Posterior vena cava (tissue), 2 donors: ENCODE measurements at regions of chr2 and their contacts with region 1.

Region 1: DNA sequence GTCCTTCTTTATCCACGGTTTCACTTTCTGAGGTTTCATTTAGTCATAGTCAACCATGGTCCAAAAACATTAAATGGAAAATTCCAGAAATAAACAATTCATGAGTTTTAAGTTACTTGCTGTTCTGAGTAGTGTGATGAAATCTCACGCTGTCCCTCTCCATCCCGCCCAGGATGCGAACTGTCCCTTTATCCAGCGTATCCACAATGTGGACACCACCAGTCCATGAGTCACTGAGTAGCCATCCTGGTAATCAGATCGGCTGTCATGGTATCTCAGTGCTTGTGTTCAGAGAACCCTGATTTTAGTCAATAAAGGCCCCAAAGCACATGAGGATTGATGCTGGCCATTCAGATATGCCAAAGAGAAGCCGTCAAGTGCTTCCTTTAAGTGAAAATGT is 3.7 kb downstream of the SP140L start:
- DNase-seq: no peak

Region 2: DNA sequence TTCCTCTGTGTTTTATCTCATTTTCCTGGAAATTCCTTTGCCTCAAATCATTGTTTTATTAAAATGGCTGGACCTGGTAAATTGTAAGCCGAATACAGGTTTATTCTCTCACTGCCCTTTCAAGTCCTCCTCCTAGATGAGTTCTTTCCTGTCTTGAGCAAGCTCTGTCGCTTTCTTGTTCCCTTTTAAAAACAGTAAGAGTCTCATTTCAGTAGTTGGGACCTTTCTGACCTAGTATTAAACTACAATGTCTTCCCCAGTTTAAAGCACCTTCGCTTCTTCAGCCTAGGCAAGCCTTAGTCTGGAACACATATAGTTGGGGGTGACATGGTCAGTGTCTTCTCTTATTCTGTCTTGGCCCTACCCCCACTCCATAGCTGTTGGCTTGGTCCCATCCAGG is 44.7 kb before region 1 on chr2:
- intact Hi-C with region 1: no loop called
- DNase-seq: no peak

Region 3: GRCh38 chr2:230356084-230356483 is 25.4 kb after region 1 on chr2:
- intact Hi-C with region 1: loop called in 1 of 2 experiments (anchors 1 kb)
- DNase-seq: no peak